ENCODE measurements at regions of chr12 and their contacts with region 1.

Region 1: DNA sequence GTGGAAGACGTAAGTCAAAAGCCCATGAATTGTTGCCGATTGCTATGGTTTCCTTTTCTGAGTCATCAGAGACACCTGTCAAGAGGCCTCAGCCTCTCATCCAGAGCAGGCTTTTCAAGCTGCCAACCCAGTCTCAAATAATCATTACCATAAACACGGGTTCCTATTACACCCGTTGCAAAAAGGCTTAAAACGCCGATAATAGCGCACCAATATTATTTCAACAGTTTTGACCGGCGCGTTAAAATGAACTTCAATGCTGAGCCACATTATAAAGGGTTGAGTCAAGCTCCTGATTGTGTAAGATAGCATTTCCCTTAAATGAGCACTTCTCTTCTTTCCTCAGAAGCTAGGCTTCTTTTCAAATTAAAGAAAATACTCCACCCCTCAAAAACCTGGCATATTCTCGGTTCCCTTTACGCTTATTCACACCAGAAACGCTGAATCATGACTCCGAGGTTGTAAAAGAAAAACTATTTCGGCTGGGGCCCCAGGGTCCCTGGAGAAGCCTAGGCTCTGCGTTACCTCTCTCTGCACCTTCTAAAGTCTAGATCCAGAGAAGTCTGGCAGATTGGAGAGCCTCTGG is 1.4 kb downstream of the TMTC1 start:
- DNase-seq: peak in 1 of 2 donors; percentile 68
- H3K4me3 ChIP-seq: peak overlapping the region; percentile 75 to 94
- H3K27ac ChIP-seq: peak overlapping the region; percentile 87 to 91
- H3K4me1 ChIP-seq: peaks cover 0 to 20% of the 10 kb centered on the region in 2 donors
- H3K27me3 ChIP-seq: no peaks in the 10 kb centered on the region
- CTCF ChIP-seq: no peak

Region 2: DNA sequence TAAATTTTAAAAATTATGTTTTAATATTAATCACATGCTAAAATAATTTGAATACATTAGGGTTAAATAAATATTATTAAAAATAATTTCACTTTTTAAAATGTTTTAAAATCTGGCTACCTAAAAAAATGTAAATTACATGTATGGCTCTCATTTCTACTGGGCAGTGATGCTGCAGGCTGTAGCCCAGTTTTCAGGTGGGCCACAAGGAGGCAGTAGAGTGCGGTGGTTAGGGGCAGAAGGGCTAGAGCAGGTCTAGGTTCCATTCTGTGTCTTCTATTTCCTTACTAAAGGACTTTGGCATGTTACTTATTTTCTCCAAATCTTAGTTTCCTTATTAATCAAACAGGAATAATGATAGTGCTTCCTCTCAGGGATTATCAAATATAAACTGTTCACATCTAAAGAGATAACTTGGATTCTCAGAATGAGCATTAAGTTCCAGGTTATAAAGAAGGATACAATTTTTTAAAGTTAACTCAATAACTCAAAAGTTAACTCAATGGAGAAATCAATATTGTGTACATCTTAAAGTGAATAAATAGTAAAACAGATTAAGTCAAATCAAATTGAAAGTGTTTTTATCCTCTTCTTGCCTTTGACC is 230.0 kb before region 1 on chr12:
- intact Hi-C with region 1: loop called (anchors 5 kb)
- DNase-seq: peak in 1 of 2 donors; percentile 74
- H3K4me3 ChIP-seq: no peak overlapping the region
- H3K27ac ChIP-seq: peak overlapping the region in 1 of 2 donors; percentile 41
- H3K4me1 ChIP-seq: peaks cover 0 to 5% of the 10 kb centered on the region in 2 donors
- H3K27me3 ChIP-seq: no peaks in the 10 kb centered on the region
- CTCF ChIP-seq: peak; percentile 52 to 84 (median 77)

Region 3: GRCh38 chr12:29655861-29656260 is 126.5 kb before region 1 on chr12:
- intact Hi-C with region 1: no loop called
- DNase-seq: no peak
- H3K4me3 ChIP-seq: no peak overlapping the region
- H3K27ac ChIP-seq: no peak overlapping the region
- H3K4me1 ChIP-seq: no peaks in the 10 kb centered on the region
- H3K27me3 ChIP-seq: no peaks in the 10 kb centered on the region
- CTCF ChIP-seq: no peak

Region 4: DNA sequence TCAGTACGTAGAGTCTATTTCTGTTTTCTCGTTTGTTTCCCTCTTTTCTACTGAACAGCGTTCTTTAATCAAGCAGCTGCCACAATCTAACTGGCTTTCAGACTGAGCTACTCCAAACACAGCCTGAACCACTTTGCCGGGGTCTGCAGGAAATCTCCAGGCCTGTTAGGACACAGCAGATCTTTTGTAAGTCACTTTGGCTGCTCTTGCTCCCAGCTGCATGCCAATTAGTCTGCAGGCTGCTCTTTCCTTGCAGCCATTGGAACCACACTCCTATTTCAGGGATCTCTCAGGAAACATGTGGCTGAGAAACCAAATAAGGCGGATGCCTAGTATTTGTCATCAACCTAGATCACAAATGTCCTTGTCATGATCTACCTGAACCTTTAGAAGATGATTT is 72.3 kb before region 1 on chr12:
- intact Hi-C with region 1: loop called (anchors 5 kb)
- DNase-seq: no peak
- H3K4me3 ChIP-seq: peak overlapping the region in 1 of 2 donors; percentile 26
- H3K27ac ChIP-seq: peak overlapping the region; percentile 43 to 57
- H3K4me1 ChIP-seq: peaks cover 2 to 31% of the 10 kb centered on the region in 2 donors
- H3K27me3 ChIP-seq: no peaks in the 10 kb centered on the region
- CTCF ChIP-seq: no peak

Region 5: GRCh38 chr12:29944269-29945000 is 162.1 kb after region 1 on chr12:
- intact Hi-C with region 1: loop called (anchors 10 kb)
- DNase-seq: no peak
- H3K4me3 ChIP-seq: no peak overlapping the region
- H3K27ac ChIP-seq: peak overlapping the region in 1 of 2 donors; percentile 53
- H3K4me1 ChIP-seq: peaks cover 0 to 7% of the 10 kb centered on the region in 2 donors
- H3K27me3 ChIP-seq: no peaks in the 10 kb centered on the region
- CTCF ChIP-seq: no peak